ENCODE measurements at regions of chr2 and their contacts with region 1.

Region 1: DNA sequence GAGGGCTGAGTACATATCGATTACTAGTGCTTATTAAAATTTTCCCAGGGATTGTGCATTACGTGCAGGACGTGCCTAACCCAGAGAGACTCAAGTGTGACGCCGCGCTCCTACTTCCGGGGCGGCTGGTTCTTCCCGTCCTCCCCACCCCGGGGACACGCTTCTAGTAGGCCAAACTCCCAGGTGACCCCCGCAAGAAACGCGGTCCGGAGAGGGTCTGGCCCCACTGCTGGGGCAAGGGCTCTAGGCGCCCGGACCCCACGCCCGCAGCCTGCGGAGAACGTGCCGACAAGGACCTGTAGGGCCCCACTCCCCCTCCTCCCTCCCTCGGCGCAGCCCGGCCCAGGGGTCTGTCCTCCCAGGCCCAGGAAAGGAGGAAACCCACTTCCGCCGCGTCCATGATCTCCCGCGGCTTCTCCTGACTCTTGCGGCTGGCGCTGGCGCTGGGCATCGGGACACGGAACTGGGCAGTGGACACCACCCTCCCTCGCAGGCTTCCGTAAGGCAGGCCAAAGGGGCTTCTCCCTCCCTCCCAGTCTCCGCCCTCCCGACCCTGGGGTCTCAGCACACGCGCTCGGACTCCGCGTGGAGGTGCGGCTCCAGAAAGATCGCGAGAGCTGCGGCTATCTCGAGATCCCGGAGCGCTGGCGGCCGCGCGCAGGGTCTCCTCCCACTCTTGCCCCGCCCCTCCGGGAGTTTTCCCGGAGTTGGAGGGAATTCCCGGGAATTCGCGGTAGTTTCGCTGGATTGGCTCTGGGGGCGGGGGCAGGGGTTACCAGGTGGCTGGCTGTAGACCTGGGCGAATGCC is at the start of gene DARS1:
- DNase-seq: peak; percentile 80
- ATAC-seq: peak; percentile 86
- H3K4me3 Mint-ChIP-seq: peak within 1 kb of the TSS; percentile 95
- H3K27ac Mint-ChIP-seq: peak within 1 kb of the TSS; percentile 97
- H3K4me1 Mint-ChIP-seq: peaks cover 50% of the 10 kb centered on the region
- H3K27me3 Mint-ChIP-seq: no peaks in the 10 kb centered on the region
- CTCF ChIP-seq: no peak
- total RNA-seq, gene DARS1: 96.3 and 103 TPM in 2 replicates

Region 2: GRCh38 chr2:134918526-134919340 is 1066.5 kb before region 1 on chr2 and contains the start of gene CCNT2:
- CTCF ChIA-PET with region 1: no interaction called
- POLR2A ChIA-PET with region 1: no interaction called
- intact Hi-C with region 1: loop called (anchors 1 kb)
- DNase-seq: peak; percentile 100
- ATAC-seq: peak; percentile 83
- H3K4me3 Mint-ChIP-seq: peak within 1 kb of the TSS; percentile 98
- H3K27ac Mint-ChIP-seq: peak within 1 kb of the TSS; percentile 99
- H3K4me1 Mint-ChIP-seq: peaks cover 54% of the 10 kb centered on the region
- H3K27me3 Mint-ChIP-seq: peaks cover 3% of the 10 kb centered on the region
- CTCF ChIP-seq: no peak
- total RNA-seq, gene CCNT2: 62.9 and 73.4 TPM in 2 replicates

Region 3: GRCh38 chr2:135876066-135876711 is 109.0 kb before region 1 on chr2 and contains the start of gene MCM6:
- CTCF ChIA-PET with region 1: no interaction called
- POLR2A ChIA-PET with region 1: no interaction called
- intact Hi-C with region 1: loop called (anchors 2 kb)
- DNase-seq: peak; percentile 87
- ATAC-seq: peak; percentile 90
- H3K4me3 Mint-ChIP-seq: peak within 1 kb of the TSS; percentile 95
- H3K27ac Mint-ChIP-seq: peak within 1 kb of the TSS; percentile 90
- H3K4me1 Mint-ChIP-seq: peaks cover 24% of the 10 kb centered on the region
- H3K27me3 Mint-ChIP-seq: no peaks in the 10 kb centered on the region
- CTCF ChIP-seq: no peak
- total RNA-seq, gene MCM6: 27.9 and 28.9 TPM in 2 replicates

Region 4: DNA sequence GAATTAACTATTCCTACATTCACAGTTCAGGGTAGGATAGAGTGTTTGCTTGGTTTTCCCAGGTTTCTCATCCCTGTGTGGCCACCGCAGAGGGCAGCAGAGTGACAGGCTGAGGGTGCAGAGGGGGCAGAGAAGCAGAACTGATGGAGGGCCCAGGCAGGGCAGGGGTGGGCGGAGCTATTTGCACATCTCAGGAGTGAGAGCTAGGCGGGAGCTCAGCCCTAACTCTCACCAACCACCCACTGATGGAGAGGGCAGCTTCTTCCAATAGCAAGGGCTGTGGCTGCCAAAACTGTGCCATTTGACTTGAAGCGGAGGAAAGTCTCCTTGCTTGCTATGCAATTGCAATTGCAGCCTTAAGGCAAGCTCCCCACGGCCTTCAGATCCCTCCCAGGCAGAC is 12.2 kb after region 1 on chr2:
- CTCF ChIA-PET with region 1: interaction called, 22 read pairs
- POLR2A ChIA-PET with region 1: interaction called, 12 read pairs
- intact Hi-C with region 1: loop called (anchors 1 kb)
- DNase-seq: peak; percentile 41
- ATAC-seq: peak; percentile 97
- H3K4me3 Mint-ChIP-seq: peak overlapping the region; percentile 24
- H3K27ac Mint-ChIP-seq: peak overlapping the region; percentile 86
- H3K4me1 Mint-ChIP-seq: peaks cover 51% of the 10 kb centered on the region
- H3K27me3 Mint-ChIP-seq: no peaks in the 10 kb centered on the region
- CTCF ChIP-seq: no peak

Region 5: GRCh38 chr2:136212423-136213378 is 227.5 kb after region 1 on chr2:
- CTCF ChIA-PET with region 1: no interaction called
- POLR2A ChIA-PET with region 1: interaction called, 10 read pairs
- intact Hi-C with region 1: loop called (anchors 2 kb)
- DNase-seq: no peak
- ATAC-seq: peak; percentile 72
- H3K4me3 Mint-ChIP-seq: peak overlapping the region; percentile 64
- H3K27ac Mint-ChIP-seq: peak overlapping the region; percentile 97
- H3K4me1 Mint-ChIP-seq: peaks cover 97% of the 10 kb centered on the region
- H3K27me3 Mint-ChIP-seq: no peaks in the 10 kb centered on the region
- CTCF ChIP-seq: no peak

Region 6: DNA sequence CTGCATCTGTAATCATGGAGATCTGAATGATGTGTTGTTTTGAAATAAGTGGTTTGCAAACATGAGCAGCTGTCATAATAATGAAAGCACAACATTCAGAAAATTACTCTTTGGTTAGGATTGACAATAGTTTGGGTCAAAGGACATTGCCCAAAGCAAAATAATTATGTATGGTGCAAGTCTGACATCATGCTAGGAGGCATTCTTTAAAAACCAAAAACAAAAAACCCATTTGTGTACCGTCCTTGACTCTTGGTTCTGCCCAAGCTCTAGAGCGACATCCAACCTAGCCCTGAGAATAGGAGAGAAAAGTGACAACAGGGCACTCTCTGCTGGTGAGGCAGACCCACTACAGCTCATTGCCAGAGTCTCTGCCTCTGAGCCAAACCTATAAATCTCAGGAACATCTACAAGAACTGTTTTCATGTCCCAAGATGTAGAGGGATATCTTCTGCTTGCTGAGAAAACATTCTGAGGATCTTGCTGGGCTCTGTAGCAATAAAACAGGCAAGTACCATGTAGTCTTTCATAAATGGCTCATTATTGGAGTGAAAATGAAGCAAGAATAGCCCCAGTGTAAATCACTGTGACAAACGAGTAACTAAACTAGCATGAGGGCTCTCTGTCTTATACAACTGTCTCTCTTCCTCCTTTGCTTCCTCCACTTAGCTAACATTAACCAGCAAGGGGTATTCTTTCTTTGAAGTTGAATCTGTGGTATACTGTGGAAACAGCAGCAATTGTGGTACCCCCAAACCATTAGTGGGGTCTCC is 399.5 kb after region 1 on chr2:
- CTCF ChIA-PET with region 1: interaction called, 6 read pairs
- POLR2A ChIA-PET with region 1: interaction called, 17 read pairs
- intact Hi-C with region 1: loop called (anchors 2 kb)
- DNase-seq: no peak
- ATAC-seq: peak; percentile 67
- H3K4me3 Mint-ChIP-seq: peak overlapping the region; percentile 33
- H3K27ac Mint-ChIP-seq: peak overlapping the region; percentile 94
- H3K4me1 Mint-ChIP-seq: peaks cover 50% of the 10 kb centered on the region
- H3K27me3 Mint-ChIP-seq: no peaks in the 10 kb centered on the region
- CTCF ChIP-seq: peak; percentile 38

Measured in activated B cell treated with CpG ODN at 0.5 μM for 24 hours (primary cell).